ENCODE measurements at regions of chr2 and their contacts with region 1.

Region 1: GRCh38 chr2:231612179-231613053 is 19.8 kb downstream of the TEX44 start:
- DNase-seq: peak; percentile 95
- H3K4me3 ChIP-seq: no peak overlapping the region
- H3K27ac ChIP-seq: peak overlapping the region; percentile 89
- H3K4me1 ChIP-seq: peaks cover 28% of the 10 kb centered on the region
- H3K27me3 ChIP-seq: no peaks in the 10 kb centered on the region
- CTCF ChIP-seq: peak; percentile 74 to 96
- POLR2A ChIP-seq: no peak

Region 2: DNA sequence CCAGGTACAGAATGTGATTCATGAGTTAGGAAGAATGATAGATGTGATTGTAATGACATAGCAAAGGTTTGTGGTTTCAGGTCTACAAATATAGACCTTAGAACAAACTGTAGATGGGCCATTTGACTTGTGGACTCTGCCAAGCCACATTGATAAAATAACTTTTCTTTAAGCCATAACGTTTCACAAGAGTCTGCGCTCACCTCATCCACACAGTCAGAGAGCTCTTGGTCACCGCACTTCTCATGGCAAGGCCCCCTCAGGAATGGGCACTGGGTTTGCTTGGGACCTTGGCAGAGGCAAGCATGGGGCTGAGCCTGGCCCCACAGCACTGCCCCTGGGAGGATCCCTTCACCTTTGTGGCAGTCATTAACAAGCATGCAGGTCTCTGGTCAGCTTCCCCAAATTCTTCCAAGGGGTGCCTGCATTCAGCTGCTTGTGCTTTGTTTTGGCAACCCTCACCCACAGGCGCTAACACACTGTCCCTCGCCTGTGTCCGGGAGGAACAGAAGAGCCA is 400.0 kb before region 1 on chr2:
- CTCF ChIA-PET with region 1: no interaction called
- POLR2A ChIA-PET with region 1: no interaction called
- dilution Hi-C with region 1: no loop called
- intact Hi-C with region 1: no loop called
- DNase-seq: no peak
- H3K4me3 ChIP-seq: no peak overlapping the region
- H3K27ac ChIP-seq: no peak overlapping the region
- H3K4me1 ChIP-seq: no peaks in the 10 kb centered on the region
- H3K27me3 ChIP-seq: no peaks in the 10 kb centered on the region
- CTCF ChIP-seq: no peak
- POLR2A ChIP-seq: no peak

Region 3: GRCh38 chr2:231642631-231643494 is 30.4 kb after region 1 on chr2:
- CTCF ChIA-PET with region 1: interaction called, 30 read pairs
- POLR2A ChIA-PET with region 1: no interaction called
- dilution Hi-C with region 1: no loop called
- intact Hi-C with region 1: loop called (anchors 1 kb)
- DNase-seq: peak; percentile 94
- H3K4me3 ChIP-seq: peak overlapping the region in 2 of 3 experiments; percentile 6 to 19
- H3K27ac ChIP-seq: peak overlapping the region; percentile 77
- H3K4me1 ChIP-seq: peaks cover 16% of the 10 kb centered on the region
- H3K27me3 ChIP-seq: no peaks in the 10 kb centered on the region
- CTCF ChIP-seq: no peak
- POLR2A ChIP-seq: no peak

Region 4: DNA sequence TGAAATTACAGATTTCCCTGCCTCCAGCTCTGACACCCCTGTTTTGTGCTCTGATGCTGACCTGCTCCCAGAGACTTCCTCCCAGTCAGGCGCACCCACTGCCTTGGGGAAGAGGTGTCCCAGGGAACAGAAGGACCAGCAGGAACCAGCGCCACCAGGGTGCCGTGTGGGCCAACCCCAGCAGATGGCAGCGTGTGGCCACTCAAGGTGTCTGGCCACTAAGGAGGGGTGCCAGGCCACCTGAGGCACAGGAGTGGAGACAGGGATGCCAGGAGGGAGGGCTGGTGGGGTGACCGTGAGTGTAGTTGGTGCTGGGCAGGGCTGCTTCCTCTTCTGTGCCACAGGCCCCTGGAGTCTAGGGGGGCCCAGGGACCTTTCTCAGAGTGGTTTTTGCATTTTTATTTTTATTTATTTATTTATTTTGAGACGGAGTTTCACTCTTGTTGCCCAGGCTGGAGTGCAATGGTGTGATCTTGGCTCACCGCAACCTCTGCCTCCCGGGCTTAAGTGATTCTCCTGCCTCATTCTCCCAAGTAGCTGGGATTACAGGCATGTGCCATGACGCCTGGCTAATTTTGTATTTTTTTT is 36.3 kb after region 1 on chr2:
- CTCF ChIA-PET with region 1: interaction called, 30 read pairs
- POLR2A ChIA-PET with region 1: no interaction called
- dilution Hi-C with region 1: no loop called
- intact Hi-C with region 1: no loop called
- DNase-seq: peak; percentile 65
- H3K4me3 ChIP-seq: no peak overlapping the region
- H3K27ac ChIP-seq: no peak overlapping the region
- H3K4me1 ChIP-seq: peaks cover under 1% of the 10 kb centered on the region
- H3K27me3 ChIP-seq: no peaks in the 10 kb centered on the region
- CTCF ChIP-seq: peak; percentile 72 to 85
- POLR2A ChIP-seq: no peak

Region 5: DNA sequence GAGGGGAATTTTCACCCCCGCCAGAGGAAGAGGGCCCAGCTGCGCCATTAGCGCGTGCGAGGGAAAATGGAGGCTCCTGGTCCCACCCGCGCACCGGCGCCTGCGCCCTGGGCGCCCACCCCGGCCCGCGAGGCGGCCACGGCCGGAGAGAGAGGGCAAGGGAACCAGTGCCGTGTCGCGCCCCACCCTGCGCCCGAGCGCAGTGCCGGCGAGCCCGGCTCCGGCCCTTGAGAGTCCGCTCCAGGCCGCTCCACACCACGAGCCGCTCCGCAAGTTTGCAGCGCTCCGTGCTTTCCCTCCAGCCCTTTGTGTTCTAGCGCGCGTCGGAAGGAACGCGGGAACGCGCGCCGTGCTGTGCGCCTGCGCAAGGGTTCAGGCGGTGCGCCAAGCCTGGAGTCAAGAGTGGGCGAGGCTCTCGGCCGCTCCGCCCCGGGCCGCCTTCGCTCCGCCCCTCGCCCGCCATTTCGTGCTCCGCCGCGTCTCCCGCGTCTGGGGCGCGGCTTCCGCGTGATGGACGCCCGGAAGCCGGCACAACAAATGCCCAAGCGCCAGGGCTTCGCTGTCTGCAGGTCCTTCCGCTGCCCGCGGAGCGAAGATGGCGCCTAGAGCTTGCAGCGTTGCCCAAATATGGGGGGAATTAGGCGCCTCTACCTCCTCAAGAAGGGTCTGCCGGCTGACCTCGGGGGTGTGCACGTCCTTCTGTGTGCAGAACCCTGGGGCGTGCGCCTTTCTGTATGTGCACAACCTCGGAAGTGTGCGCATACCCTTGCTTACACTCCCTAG is 49.8 kb after region 1 on chr2:
- CTCF ChIA-PET with region 1: interaction called, 4 read pairs
- POLR2A ChIA-PET with region 1: interaction called, 3 read pairs
- dilution Hi-C with region 1: no loop called
- intact Hi-C with region 1: loop called (anchors 1 kb)
- DNase-seq: peak; percentile 97
- H3K4me3 ChIP-seq: peak overlapping the region in 2 of 3 experiments; percentile 25 to 32
- H3K27ac ChIP-seq: peak overlapping the region; percentile 57
- H3K4me1 ChIP-seq: peaks cover 23% of the 10 kb centered on the region
- H3K27me3 ChIP-seq: no peaks in the 10 kb centered on the region
- CTCF ChIP-seq: no peak
- POLR2A ChIP-seq: peak; percentile 85

Region 6: GRCh38 chr2:231706731-231707624 is 94.6 kb after region 1 on chr2:
- CTCF ChIA-PET with region 1: interaction called, 9 read pairs
- POLR2A ChIA-PET with region 1: interaction called, 15 read pairs
- dilution Hi-C with region 1: no loop called
- intact Hi-C with region 1: loop called (anchors 1 kb)
- DNase-seq: peak; percentile 98
- H3K4me3 ChIP-seq: peak overlapping the region; percentile 23 to 64 (median 52)
- H3K27ac ChIP-seq: peak overlapping the region; percentile 89
- H3K4me1 ChIP-seq: peaks cover 12% of the 10 kb centered on the region
- H3K27me3 ChIP-seq: no peaks in the 10 kb centered on the region
- CTCF ChIP-seq: peak; percentile 97 to 98
- POLR2A ChIP-seq: peak; percentile 50

Region 7: GRCh38 chr2:231780909-231781797 is 168.7 kb after region 1 on chr2 and contains the start of gene PDE6D:
- CTCF ChIA-PET with region 1: no interaction called
- POLR2A ChIA-PET with region 1: no interaction called
- dilution Hi-C with region 1: no loop called
- intact Hi-C with region 1: loop called (anchors 1 kb)
- DNase-seq: peak; percentile 99
- H3K4me3 ChIP-seq: peak within 1 kb of the TSS; percentile 50 to 86 (median 85)
- H3K27ac ChIP-seq: peak within 1 kb of the TSS; percentile 68
- H3K4me1 ChIP-seq: peaks cover 24% of the 10 kb centered on the region
- H3K27me3 ChIP-seq: no peaks in the 10 kb centered on the region
- CTCF ChIP-seq: no peak
- POLR2A ChIP-seq: peak; percentile 67
- total RNA-seq, gene PDE6D: 23.8 and 24.3 TPM in 2 replicates

Region 8: GRCh38 chr2:231786177-231786916 is 173.9 kb after region 1 on chr2 and contains the start of gene COPS7B:
- CTCF ChIA-PET with region 1: no interaction called
- POLR2A ChIA-PET with region 1: no interaction called
- dilution Hi-C with region 1: no loop called
- intact Hi-C with region 1: loop called (anchors 1 kb)
- DNase-seq: peak; percentile 85
- H3K4me3 ChIP-seq: peak within 1 kb of the TSS; percentile 46 to 84 (median 64)
- H3K27ac ChIP-seq: peak within 1 kb of the TSS; percentile 53
- H3K4me1 ChIP-seq: peaks cover 27% of the 10 kb centered on the region
- H3K27me3 ChIP-seq: no peaks in the 10 kb centered on the region
- CTCF ChIP-seq: peak; percentile 34 to 42
- POLR2A ChIP-seq: peak; percentile 69
- total RNA-seq, gene COPS7B: 42.4 and 50.3 TPM in 2 replicates

Region 9: GRCh38 chr2:232103140-232103737 is 490.8 kb after region 1 on chr2:
- CTCF ChIA-PET with region 1: no interaction called
- POLR2A ChIA-PET with region 1: no interaction called
- dilution Hi-C with region 1: no loop called
- intact Hi-C with region 1: no loop called
- DNase-seq: peak; percentile 10
- H3K4me3 ChIP-seq: no peak overlapping the region
- H3K27ac ChIP-seq: no peak overlapping the region
- H3K4me1 ChIP-seq: no peaks in the 10 kb centered on the region
- H3K27me3 ChIP-seq: no peaks in the 10 kb centered on the region
- CTCF ChIP-seq: no peak
- POLR2A ChIP-seq: no peak